ENCODE measurements at regions of chr3 and their contacts with region 1.

Region 1: DNA sequence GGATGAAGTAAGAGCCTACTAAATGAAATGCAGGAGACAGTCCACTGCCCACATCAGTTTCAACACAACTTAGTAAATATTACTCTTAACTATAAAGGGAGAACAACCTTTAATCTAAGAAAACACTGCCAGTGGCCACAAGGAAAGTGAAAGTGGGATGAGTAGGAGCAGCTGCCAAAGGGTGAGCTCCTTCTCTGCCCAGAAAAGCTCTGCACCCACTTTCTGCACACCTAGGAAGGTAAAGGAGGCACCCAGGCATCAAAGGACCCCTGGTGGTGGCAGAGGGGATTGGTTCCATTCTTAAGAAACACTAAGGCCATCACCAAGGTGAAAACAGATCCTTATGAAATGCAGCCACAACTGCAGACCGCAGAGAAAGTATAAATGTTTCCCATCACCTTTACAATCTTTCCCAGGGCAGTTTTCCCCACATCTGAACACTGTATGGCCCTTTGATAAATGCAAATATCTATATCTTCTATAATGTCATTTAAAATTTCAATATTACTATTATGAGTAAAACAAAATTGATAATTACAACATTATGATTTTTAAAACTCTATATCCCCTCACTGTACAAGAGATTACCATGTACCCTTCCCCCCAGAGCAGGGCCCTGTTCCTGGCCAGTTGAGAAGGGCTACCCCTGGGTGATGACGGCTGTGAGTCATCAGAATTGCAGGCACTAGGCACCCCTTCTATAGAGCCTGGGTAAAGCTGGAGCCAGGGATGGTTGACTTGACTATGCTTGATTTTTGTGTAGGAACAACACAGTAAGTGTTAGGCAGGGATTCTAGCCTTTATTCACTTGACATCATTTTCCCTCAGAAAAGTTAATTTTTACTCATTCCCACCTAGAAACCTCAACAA is 92.0 kb downstream of the SNRK start:
- DNase-seq: peak in 1 of 3 donors; percentile 59
- ATAC-seq: peak; percentile 22 to 51
- H3K4me3 ChIP-seq: no peak overlapping the region
- H3K27ac ChIP-seq: no peak overlapping the region
- H3K4me1 ChIP-seq: peaks cover 2% of the 10 kb centered on the region
- H3K27me3 ChIP-seq: no peaks in the 10 kb centered on the region

Region 2: GRCh38 chr3:43162230-43163084 is 215.8 kb before region 1 on chr3:
- intact Hi-C with region 1: loop called in 1 of 4 experiments (anchors 10 kb)
- DNase-seq: no peak
- ATAC-seq: peak; percentile 60 to 74
- H3K4me3 ChIP-seq: no peak overlapping the region
- H3K27ac ChIP-seq: no peak overlapping the region
- H3K4me1 ChIP-seq: no peaks in the 10 kb centered on the region
- H3K27me3 ChIP-seq: no peaks in the 10 kb centered on the region

Region 3: DNA sequence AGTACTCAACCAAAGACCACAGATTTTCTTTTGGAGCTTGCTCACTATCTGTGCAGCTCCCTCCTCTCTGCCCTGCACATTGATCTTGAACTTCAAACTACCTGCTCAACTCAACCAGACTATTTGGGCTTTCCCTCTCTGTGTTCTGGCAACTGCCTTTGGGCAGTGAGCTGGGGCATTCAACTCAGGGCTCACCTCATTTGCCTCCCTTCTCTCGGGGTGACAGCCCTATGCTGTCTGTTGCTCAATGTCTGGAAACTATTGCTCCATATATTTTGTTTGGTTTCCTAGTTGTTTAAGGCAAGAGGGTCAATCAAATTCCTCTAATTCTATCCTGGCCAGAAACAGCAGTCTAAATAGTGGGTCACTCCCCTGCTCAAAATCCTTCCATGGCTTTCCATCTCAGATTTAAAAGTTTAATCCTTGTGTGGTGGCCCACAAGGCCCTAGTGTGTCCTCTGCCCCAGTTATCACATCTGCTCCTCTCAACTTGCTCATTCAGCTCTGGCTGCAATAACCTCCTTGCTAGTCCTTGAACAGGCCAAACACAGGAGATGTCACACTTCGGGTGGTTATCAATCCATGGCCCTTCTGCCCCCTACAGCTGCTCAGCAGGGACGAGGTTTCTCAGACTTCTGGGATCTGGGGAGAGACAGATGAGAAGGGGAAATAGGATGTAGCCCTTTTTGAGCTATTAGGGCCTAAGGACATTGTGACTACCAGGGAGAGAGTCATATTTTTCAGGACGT is 24.2 kb before region 1 on chr3:
- intact Hi-C with region 1: no loop called
- DNase-seq: no peak
- ATAC-seq: peak in 1 of 2 donors; percentile 9
- H3K4me3 ChIP-seq: no peak overlapping the region
- H3K27ac ChIP-seq: no peak overlapping the region
- H3K4me1 ChIP-seq: no peaks in the 10 kb centered on the region
- H3K27me3 ChIP-seq: no peaks in the 10 kb centered on the region

Region 4: GRCh38 chr3:43670635-43671522 is 292.6 kb after region 1 on chr3:
- intact Hi-C with region 1: no loop called
- DNase-seq: no peak
- ATAC-seq: no peak
- H3K4me3 ChIP-seq: no peak overlapping the region
- H3K27ac ChIP-seq: no peak overlapping the region
- H3K4me1 ChIP-seq: no peaks in the 10 kb centered on the region
- H3K27me3 ChIP-seq: no peaks in the 10 kb centered on the region